GM12878 (cell line): ENCODE measurements at regions of chrX and their contacts with region 1.

Region 1: DNA sequence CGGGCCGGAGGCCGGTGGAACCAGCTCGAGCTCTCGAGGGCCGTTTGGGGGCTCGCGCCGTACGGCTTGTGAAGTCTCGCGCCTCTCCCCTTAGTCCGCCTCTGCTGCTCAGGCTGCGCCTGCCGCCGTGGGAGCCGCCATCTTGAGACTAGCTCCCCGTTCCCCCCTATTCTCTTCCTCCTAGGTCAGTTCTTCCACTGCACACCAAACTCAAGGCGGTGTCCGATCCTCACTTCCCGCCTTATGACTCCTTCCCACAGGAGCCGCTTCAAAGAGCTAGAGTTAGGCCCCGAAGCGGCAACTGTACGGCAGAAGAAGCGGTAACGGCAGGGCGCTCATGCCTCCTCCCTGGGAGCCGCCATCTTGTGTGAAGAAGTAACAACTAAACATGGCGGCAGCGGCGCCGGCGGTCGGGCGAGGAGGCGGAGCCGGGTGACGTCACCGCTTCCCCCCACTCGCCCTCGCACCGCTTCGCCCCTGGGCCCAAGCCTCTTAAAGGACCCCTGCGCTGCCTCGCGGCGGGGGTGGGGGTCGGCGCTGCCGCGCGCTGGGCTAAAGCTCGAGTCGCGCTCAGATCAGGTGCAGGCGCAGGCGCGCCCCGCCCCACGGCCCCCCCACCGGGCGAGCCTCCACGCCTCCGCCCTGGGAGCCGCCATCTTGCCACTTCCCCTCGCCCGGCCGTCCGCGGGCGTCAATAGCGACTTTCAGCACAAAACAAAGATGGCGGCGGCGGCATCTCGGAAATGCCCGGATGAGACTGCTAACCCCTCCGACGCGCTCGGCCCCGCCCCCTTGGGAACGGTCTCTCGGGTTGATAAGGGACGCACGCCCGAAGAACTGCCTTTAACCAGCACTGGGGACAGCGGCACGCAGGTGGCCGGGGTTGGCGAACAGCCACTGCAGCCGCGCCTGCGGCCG is at the start of gene HCFC1:
- DNase-seq: peak; percentile 64
- ATAC-seq: peak; percentile 63
- H3K4me3 ChIP-seq: peak within 1 kb of the TSS; percentile 95
- H3K27ac ChIP-seq: peak within 1 kb of the TSS; percentile 99
- H3K4me1 ChIP-seq: peaks cover 19% of the 10 kb centered on the region
- H3K27me3 ChIP-seq: no peaks in the 10 kb centered on the region
- CTCF ChIP-seq: no peak
- EP300 ChIP-seq: no peak; a peak in 1 of 4 replicates
- POLR2A ChIP-seq: peak; percentile 74
- RAD21 ChIP-seq: no peak
- polyA plus RNA-seq, gene HCFC1: 3.9 to 7.6 TPM

Region 2: GRCh38 chrX:152958524-152959465 is 1012.9 kb before region 1 on chrX:
- CTCF ChIA-PET with region 1: no interaction called
- POLR2A ChIA-PET with region 1: no interaction called
- RAD21 ChIA-PET with region 1: no interaction called
- SMC1A ChIA-PET with region 1: no interaction called
- in situ Hi-C with region 1: loop called (anchors 10 kb)
- intact Hi-C with region 1: no loop called
- DNase-seq: peak; percentile 55
- ATAC-seq: peak; percentile 100
- H3K4me3 ChIP-seq: peak overlapping the region; percentile 53; the same call in 1 of the 2 replicates
- H3K27ac ChIP-seq: no peak overlapping the region
- H3K4me1 ChIP-seq: no peaks in the 10 kb centered on the region
- H3K27me3 ChIP-seq: no peaks in the 10 kb centered on the region
- CTCF ChIP-seq: peak; percentile 87 to 97 (median 89)
- EP300 ChIP-seq: no peak
- POLR2A ChIP-seq: 0 out of 2 replicates have a peak, but pooled peaks have one; percentile 38
- RAD21 ChIP-seq: peak; percentile 90

Region 3: GRCh38 chrX:153897899-153898298 is 73.8 kb before region 1 on chrX:
- CTCF ChIA-PET with region 1: no interaction called
- POLR2A ChIA-PET with region 1: no interaction called
- RAD21 ChIA-PET with region 1: no interaction called
- SMC1A ChIA-PET with region 1: no interaction called
- in situ Hi-C with region 1: no loop called
- intact Hi-C with region 1: no loop called
- DNase-seq: no peak
- ATAC-seq: no peak
- H3K4me3 ChIP-seq: no peak overlapping the region
- H3K27ac ChIP-seq: no peak overlapping the region
- H3K4me1 ChIP-seq: peaks cover 4% of the 10 kb centered on the region
- H3K27me3 ChIP-seq: no peaks in the 10 kb centered on the region
- CTCF ChIP-seq: no peak
- EP300 ChIP-seq: no peak
- POLR2A ChIP-seq: no peak
- RAD21 ChIP-seq: no peak

Region 4: DNA sequence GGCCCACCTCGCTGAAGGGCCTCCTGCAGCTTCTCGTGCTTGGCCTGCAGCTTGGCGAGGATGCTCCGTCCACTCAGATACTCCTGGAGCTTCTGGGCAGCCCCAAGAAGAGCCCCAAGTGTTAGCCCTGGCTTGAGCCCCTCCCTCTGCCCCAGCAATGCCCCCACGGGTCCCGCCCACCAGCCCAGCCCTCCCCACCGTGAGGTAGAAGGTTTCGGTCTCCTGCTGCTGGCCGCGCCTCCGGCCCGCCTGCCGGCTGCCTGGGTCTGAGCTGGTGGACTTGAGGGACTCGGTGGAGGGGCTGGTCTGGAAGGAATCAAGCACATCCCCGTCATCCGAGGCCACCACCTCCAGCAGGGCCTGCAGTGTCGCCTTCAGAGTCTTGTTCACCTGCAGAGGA is 58.5 kb before region 1 on chrX:
- CTCF ChIA-PET with region 1: no interaction called
- POLR2A ChIA-PET with region 1: no interaction called
- RAD21 ChIA-PET with region 1: no interaction called
- SMC1A ChIA-PET with region 1: no interaction called
- in situ Hi-C with region 1: no loop called
- intact Hi-C with region 1: no loop called
- DNase-seq: no peak
- ATAC-seq: no peak
- H3K4me3 ChIP-seq: no peak overlapping the region
- H3K27ac ChIP-seq: no peak overlapping the region
- H3K4me1 ChIP-seq: no peaks in the 10 kb centered on the region
- H3K27me3 ChIP-seq: no peaks in the 10 kb centered on the region
- CTCF ChIP-seq: no peak
- EP300 ChIP-seq: no peak
- POLR2A ChIP-seq: no peak
- RAD21 ChIP-seq: no peak

Region 5: GRCh38 chrX:153947009-153947769 is 24.5 kb before region 1 on chrX:
- CTCF ChIA-PET with region 1: interaction called, 40 read pairs
- POLR2A ChIA-PET with region 1: interaction called, 4 read pairs
- RAD21 ChIA-PET with region 1: interaction called, 9 read pairs
- SMC1A ChIA-PET with region 1: interaction called, 4 read pairs
- in situ Hi-C with region 1: no loop called
- intact Hi-C with region 1: no loop called
- DNase-seq: no peak
- ATAC-seq: peak; percentile 95
- H3K4me3 ChIP-seq: no peak overlapping the region
- H3K27ac ChIP-seq: no peak overlapping the region
- H3K4me1 ChIP-seq: no peaks in the 10 kb centered on the region
- H3K27me3 ChIP-seq: no peaks in the 10 kb centered on the region
- CTCF ChIP-seq: peak; percentile 95 to 97 (median 97); a peak in 5 of 6 replicates
- EP300 ChIP-seq: no peak
- POLR2A ChIP-seq: no peak; the same call in none of the 2 replicates
- RAD21 ChIP-seq: peak; percentile 62

Region 6: GRCh38 chrX:154002215-154002719 is 30.6 kb after region 1 on chrX:
- CTCF ChIA-PET with region 1: interaction called, 8 read pairs
- POLR2A ChIA-PET with region 1: interaction called, 8 read pairs
- RAD21 ChIA-PET with region 1: interaction called, 31 read pairs
- SMC1A ChIA-PET with region 1: interaction called, 8 read pairs
- in situ Hi-C with region 1: no loop called
- intact Hi-C with region 1: no loop called
- DNase-seq: no peak
- ATAC-seq: peak; percentile 84
- H3K4me3 ChIP-seq: no peak overlapping the region
- H3K27ac ChIP-seq: peak overlapping the region; percentile 72
- H3K4me1 ChIP-seq: peaks cover 15% of the 10 kb centered on the region
- H3K27me3 ChIP-seq: no peaks in the 10 kb centered on the region
- CTCF ChIP-seq: no peak
- EP300 ChIP-seq: no peak; a peak in 1 of 4 replicates
- POLR2A ChIP-seq: peak; percentile 38; the same call in 1 of the 2 replicates
- RAD21 ChIP-seq: no peak

Region 7: GRCh38 chrX:154013614-154014360 is 42.1 kb after region 1 on chrX:
- CTCF ChIA-PET with region 1: interaction called, 35 read pairs
- POLR2A ChIA-PET with region 1: interaction called, 11 read pairs
- RAD21 ChIA-PET with region 1: interaction called, 8 read pairs
- SMC1A ChIA-PET with region 1: interaction called, 5 read pairs
- in situ Hi-C with region 1: no loop called
- intact Hi-C with region 1: loop called (anchors 1 kb)
- DNase-seq: no peak
- ATAC-seq: peak; percentile 79
- H3K4me3 ChIP-seq: no peak overlapping the region
- H3K27ac ChIP-seq: no peak overlapping the region
- H3K4me1 ChIP-seq: peaks cover 6% of the 10 kb centered on the region
- H3K27me3 ChIP-seq: no peaks in the 10 kb centered on the region
- CTCF ChIP-seq: peak; percentile 79 to 98 (median 94)
- EP300 ChIP-seq: no peak
- POLR2A ChIP-seq: no peak
- RAD21 ChIP-seq: peak; percentile 51; the same call in 1 of the 2 replicates

Region 8: DNA sequence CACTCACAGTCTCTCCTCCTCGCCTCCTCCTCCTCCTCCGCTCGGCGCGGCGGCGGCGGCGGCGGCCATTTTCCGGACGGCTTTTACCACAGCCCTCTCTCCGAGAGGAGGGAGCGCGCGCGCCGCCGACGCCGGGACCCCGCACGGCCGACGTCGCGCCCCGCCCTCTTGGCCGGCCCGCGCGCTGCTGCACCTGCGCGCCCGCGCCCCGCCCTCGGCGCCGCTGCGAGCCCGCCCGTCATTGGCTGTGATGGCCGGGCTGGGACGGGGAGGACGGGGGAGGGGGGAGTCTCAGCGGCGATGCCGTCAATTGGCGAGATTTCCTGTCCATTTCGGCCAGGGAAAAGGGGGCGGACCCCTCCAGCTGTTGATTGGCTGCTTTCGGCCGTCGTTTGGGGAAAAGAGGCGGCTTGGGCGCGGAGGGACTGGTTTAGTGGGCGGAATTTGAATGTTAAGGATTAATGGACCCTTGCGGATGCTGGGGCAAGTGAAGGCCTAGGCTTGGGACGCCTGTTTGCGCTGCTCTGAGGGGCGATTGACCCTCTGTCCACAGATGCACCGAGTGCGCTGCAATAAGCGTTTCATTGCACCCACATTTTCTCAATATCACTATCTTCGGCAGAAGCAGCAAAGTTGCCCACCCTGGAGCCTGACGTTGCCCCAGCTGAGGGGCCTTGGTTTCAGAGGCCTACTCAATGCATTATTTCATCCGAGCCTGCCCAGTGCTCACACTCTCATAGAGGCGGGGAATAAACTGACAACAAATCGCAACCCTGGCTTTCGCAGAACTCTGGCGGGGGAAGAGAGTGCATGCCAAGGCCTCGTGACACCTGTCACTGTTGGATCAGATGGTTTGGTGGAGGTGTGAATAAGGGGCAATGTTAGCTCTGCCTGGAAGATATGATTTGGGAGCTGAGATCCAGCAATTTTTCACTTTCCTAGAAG is 126.2 kb after region 1 on chrX and contains the start of gene MECP2:
- CTCF ChIA-PET with region 1: no interaction called
- POLR2A ChIA-PET with region 1: interaction called, 4 read pairs
- RAD21 ChIA-PET with region 1: interaction called, 3 read pairs
- SMC1A ChIA-PET with region 1: no interaction called
- in situ Hi-C with region 1: no loop called
- intact Hi-C with region 1: loop called (anchors 5 kb)
- DNase-seq: peak; percentile 56
- ATAC-seq: peak; percentile 88
- H3K4me3 ChIP-seq: peak within 1 kb of the TSS; percentile 73
- H3K27ac ChIP-seq: peak within 1 kb of the TSS; percentile 68
- H3K4me1 ChIP-seq: no peaks in the 10 kb centered on the region; the same call in 1 of the 2 replicates
- H3K27me3 ChIP-seq: no peaks in the 10 kb centered on the region
- CTCF ChIP-seq: no peak
- EP300 ChIP-seq: no peak
- POLR2A ChIP-seq: no peak; the same call in none of the 2 replicates
- RAD21 ChIP-seq: no peak
- polyA plus RNA-seq, gene MECP2: 1.3 to 2.0 TPM